CD4-positive, alpha-beta T cell (primary cell): ENCODE measurements at regions of chr5 and their contacts with region 1.

Region 1: GRCh38 chr5:177113566-177114424 is 19.8 kb upstream of the NSD1 start:
- DNase-seq: peak; percentile 60 to 90 (median 78)
- ATAC-seq: peak; percentile 55
- H3K4me3 ChIP-seq: no peak overlapping the region
- H3K4me3 Mint-ChIP-seq: no peak overlapping the region
- H3K27ac ChIP-seq: no peak overlapping the region
- H3K27ac Mint-ChIP-seq: peak overlapping the region; percentile 0
- H3K4me1 ChIP-seq: peaks cover 26% of the 10 kb centered on the region
- H3K4me1 Mint-ChIP-seq: peaks cover 20% of the 10 kb centered on the region
- H3K27me3 ChIP-seq: no peaks in the 10 kb centered on the region
- H3K27me3 Mint-ChIP-seq: no peaks in the 10 kb centered on the region
- CTCF ChIP-seq: peak; percentile 99

Region 2: DNA sequence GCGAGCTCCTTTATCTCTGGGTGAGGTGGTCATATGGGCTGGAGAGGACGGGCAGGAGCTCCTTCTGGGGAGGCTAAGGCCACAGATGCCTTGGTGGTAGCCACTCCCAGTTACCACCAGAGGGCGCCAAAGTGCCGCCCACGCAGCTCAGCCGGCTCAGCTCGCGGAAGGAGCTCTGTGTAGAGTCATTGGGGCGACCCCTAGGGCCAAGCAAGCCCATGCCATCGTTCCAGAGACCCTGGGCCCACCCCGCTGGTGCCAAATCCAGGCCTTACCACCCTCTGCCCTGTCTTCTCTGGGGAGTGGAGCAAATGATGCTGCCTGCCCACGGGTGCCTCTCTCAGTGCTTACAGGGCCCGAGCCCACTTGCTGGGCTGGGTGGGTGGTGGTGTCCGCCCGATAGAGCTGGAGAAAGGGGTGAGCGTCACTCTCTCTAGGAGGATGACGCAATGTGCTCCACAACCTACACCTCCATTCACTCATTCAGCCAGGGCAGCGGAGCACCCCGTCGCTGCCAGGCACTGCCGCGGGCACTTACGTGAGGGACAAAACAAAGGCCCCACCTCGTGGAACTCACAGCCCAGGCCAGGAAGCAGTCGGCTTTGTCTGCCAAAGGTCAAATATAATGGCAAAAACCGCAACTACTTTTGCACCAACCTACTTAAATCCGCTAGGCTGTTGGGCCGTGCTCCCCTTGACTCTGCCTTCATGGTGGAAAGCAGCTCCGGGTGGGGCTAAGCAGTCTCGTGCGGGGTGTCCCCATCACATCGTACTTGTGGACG is 452.7 kb before region 1 on chr5:
- CTCF ChIA-PET with region 1: interaction called, 3 read pairs
- POLR2A ChIA-PET with region 1: no interaction called
- intact Hi-C with region 1: loop called (anchors 2 kb)
- DNase-seq: peak; percentile 58 to 91 (median 73)
- ATAC-seq: peak; percentile 76
- H3K4me3 ChIP-seq: no peak overlapping the region
- H3K4me3 Mint-ChIP-seq: peak overlapping the region; percentile 83
- H3K27ac ChIP-seq: no peak overlapping the region
- H3K27ac Mint-ChIP-seq: peak overlapping the region; percentile 52
- H3K4me1 ChIP-seq: peaks cover 35% of the 10 kb centered on the region
- H3K4me1 Mint-ChIP-seq: peaks cover 33% of the 10 kb centered on the region
- H3K27me3 ChIP-seq: peaks cover 0 to 2% of the 10 kb centered on the region in 2 experiments
- H3K27me3 Mint-ChIP-seq: peaks cover 22% of the 10 kb centered on the region
- CTCF ChIP-seq: peak; percentile 97

Region 3: GRCh38 chr5:177006265-177006972 is 107.4 kb before region 1 on chr5 and contains the start of gene UIMC1:
- CTCF ChIA-PET with region 1: no interaction called
- POLR2A ChIA-PET with region 1: no interaction called
- intact Hi-C with region 1: no loop called
- DNase-seq: peak; percentile 84 to 96 (median 89)
- ATAC-seq: peak; percentile 83
- H3K4me3 ChIP-seq: peak within 1 kb of the TSS; percentile 91
- H3K4me3 Mint-ChIP-seq: peak within 1 kb of the TSS; percentile 99
- H3K27ac ChIP-seq: peak within 1 kb of the TSS; percentile 70 to 72
- H3K27ac Mint-ChIP-seq: peak within 1 kb of the TSS; percentile 95
- H3K4me1 ChIP-seq: peaks cover 32% of the 10 kb centered on the region
- H3K4me1 Mint-ChIP-seq: peaks cover 35% of the 10 kb centered on the region
- H3K27me3 ChIP-seq: no peaks in the 10 kb centered on the region
- H3K27me3 Mint-ChIP-seq: no peaks in the 10 kb centered on the region
- CTCF ChIP-seq: no peak
- total RNA-seq, gene UIMC1: 42.3 to 50.8 TPM

Region 4: DNA sequence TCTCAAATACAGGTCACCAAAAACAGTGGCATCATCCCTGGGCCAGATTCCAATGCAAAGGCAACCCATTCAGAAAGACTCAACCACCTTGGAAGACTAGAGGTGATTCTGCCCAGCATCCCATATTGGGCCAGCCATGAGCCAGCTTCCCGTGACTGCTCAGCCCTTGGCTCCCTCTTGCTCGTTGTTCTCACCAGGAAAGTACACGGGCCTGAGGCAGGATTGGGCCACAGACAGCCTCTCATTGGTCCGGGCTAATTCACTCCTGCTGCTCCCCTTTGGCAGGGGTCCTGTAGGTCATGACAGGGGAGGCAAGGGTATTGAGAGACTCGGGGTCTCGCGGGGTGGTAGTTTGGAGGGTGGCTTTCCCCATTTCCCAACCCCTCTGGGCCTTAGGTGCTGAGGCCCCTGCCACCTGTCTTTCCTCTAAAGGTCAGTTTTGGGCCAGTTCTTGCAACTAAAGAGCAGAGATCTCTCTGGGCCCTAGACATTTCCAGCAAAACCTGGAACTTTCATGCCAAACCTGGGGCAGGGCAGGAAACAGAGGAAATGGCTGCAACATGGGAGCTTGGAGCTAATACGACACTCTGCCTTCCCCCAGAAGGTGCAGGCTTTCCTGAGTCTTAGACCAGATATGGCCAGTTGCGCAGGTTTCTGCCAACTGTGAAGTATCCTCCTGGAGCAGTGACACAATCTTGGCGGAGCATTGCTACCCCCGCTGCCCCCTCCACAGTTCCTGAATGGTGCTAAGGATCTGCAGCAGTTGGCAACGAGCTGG is 49.1 kb before region 1 on chr5:
- CTCF ChIA-PET with region 1: no interaction called
- POLR2A ChIA-PET with region 1: no interaction called
- intact Hi-C with region 1: no loop called
- DNase-seq: no peak
- ATAC-seq: no peak
- H3K4me3 ChIP-seq: no peak overlapping the region
- H3K4me3 Mint-ChIP-seq: no peak overlapping the region
- H3K27ac ChIP-seq: no peak overlapping the region
- H3K27ac Mint-ChIP-seq: no peak overlapping the region
- H3K4me1 ChIP-seq: no peaks in the 10 kb centered on the region
- H3K4me1 Mint-ChIP-seq: no peaks in the 10 kb centered on the region
- H3K27me3 ChIP-seq: no peaks in the 10 kb centered on the region
- H3K27me3 Mint-ChIP-seq: no peaks in the 10 kb centered on the region
- CTCF ChIP-seq: no peak

Region 5: DNA sequence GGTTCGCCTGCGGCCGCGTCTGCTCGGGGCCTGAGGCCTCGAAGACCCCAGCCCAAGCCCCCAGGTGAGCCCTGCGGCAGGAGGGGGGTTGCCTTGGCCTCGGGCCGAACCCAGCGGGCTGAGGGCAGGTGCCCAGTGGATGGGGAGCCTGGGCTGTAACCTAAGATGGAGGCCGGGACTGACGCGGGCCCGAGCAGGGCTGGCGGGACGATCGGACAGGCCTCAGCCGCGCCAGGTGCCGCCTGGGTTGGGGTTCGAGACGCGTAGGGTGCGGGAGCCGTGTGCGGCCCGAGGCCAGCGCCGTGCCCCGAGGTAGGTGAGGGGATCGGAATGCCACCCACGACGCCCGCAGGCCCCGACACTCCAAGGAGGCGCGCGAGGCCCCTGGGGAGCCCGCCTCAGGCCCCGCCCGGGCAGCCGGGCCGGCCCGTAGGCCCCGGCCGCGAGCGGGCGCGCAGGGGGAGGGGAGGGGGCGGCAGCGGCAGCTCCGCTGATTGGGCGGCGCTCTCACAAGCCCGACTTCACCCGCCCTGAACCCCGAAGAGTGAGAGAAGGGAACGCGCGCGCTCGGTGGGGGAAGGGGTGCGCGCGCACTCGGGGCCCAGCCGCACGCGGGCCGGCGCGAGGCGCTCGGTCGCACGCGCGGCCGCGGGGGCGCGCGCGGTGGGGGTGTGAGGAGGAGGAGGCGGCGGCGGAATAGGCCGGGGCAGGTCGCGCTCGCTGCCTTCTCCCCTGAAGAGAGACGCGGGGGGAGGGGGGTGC is 19.5 kb after region 1 on chr5 and contains the start of gene NSD1:
- CTCF ChIA-PET with region 1: interaction called, 12 read pairs
- POLR2A ChIA-PET with region 1: interaction called, 31 read pairs
- intact Hi-C with region 1: loop called (anchors 1 kb)
- DNase-seq: peak; percentile 83 to 97 (median 90)
- ATAC-seq: peak; percentile 71
- H3K4me3 ChIP-seq: peak within 1 kb of the TSS; percentile 65
- H3K4me3 Mint-ChIP-seq: peak within 1 kb of the TSS; percentile 90
- H3K27ac ChIP-seq: peak within 1 kb of the TSS; percentile 71 to 76
- H3K27ac Mint-ChIP-seq: peak within 1 kb of the TSS; percentile 97
- H3K4me1 ChIP-seq: peaks cover 54% of the 10 kb centered on the region
- H3K4me1 Mint-ChIP-seq: peaks cover 67% of the 10 kb centered on the region
- H3K27me3 ChIP-seq: no peaks in the 10 kb centered on the region
- H3K27me3 Mint-ChIP-seq: no peaks in the 10 kb centered on the region
- CTCF ChIP-seq: no peak
- total RNA-seq, gene NSD1: 87.6 to 93.3 TPM

Region 6: GRCh38 chr5:177204281-177204680 is 90.5 kb after region 1 on chr5:
- CTCF ChIA-PET with region 1: interaction called, 4 read pairs
- POLR2A ChIA-PET with region 1: no interaction called
- intact Hi-C with region 1: loop called (anchors 5 kb)
- DNase-seq: no peak
- ATAC-seq: no peak
- H3K4me3 ChIP-seq: no peak overlapping the region
- H3K4me3 Mint-ChIP-seq: no peak overlapping the region
- H3K27ac ChIP-seq: no peak overlapping the region
- H3K27ac Mint-ChIP-seq: peak overlapping the region; percentile 50
- H3K4me1 ChIP-seq: peaks cover 4% of the 10 kb centered on the region
- H3K4me1 Mint-ChIP-seq: no peaks in the 10 kb centered on the region
- H3K27me3 ChIP-seq: no peaks in the 10 kb centered on the region
- H3K27me3 Mint-ChIP-seq: no peaks in the 10 kb centered on the region
- CTCF ChIP-seq: no peak

Region 7: DNA sequence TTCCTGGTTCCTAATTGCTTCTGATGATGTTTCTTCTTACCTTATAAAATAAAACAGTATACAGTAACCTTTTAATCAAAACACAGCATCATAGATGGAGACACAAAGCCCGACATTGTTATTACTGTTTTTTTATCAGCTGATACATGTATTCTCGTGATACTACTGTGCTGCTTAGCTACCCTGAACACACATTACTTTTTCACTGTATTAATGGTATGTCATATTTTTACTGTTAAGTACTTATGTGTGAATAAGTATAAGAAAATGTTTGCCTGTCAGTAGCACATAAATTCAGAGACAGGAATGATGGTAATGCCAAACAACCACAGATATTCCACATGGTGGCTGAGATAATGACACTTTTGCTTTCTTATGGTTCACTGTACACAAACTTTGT is 121.0 kb after region 1 on chr5:
- CTCF ChIA-PET with region 1: interaction called, 8 read pairs
- POLR2A ChIA-PET with region 1: no interaction called
- intact Hi-C with region 1: loop called in 1 of 2 experiments (anchors 5 kb)
- DNase-seq: no peak
- ATAC-seq: no peak
- H3K4me3 ChIP-seq: no peak overlapping the region
- H3K4me3 Mint-ChIP-seq: no peak overlapping the region
- H3K27ac ChIP-seq: no peak overlapping the region
- H3K27ac Mint-ChIP-seq: no peak overlapping the region
- H3K4me1 ChIP-seq: no peaks in the 10 kb centered on the region
- H3K4me1 Mint-ChIP-seq: peaks cover 26% of the 10 kb centered on the region
- H3K27me3 ChIP-seq: no peaks in the 10 kb centered on the region
- H3K27me3 Mint-ChIP-seq: no peaks in the 10 kb centered on the region
- CTCF ChIP-seq: no peak

Region 8: DNA sequence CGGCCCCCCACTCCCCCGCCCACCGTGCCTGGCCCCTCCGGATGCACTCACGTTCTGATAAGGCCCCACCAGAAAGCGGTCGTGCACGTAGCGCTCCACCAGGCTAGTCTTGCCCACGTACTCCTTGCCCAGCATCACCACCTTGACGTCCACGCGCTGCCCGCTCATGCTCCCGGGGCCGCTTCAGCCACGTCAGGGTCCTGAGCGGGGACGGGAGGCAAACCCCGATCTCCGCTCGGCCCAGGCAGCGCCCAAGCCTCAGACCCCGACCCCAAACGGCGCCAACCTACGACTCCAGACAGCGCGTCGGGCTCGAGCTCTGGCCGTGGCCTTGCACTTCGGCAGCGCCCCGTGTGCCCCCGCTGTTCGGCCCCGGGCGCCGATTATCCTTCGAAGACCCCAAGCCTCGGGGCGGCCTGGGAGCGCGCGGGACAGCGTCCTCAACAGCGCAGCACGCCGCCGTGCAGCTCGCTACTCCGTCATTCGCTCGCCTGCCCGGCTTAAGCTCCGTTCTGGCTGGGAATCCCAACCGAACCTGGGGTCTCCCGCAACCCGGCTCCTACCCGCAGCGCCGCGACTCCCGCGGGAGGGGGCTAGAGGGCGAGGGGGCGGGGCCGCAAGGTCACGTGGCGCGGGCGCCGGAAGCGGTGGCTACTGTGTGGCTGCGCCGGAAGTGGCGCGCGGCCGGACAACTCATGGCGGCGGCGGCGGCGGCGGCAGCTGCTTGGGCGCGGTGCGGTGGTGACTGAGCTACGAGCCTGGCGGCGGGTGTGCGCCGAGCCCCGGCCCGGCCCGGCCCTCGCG is 189.5 kb after region 1 on chr5 and contains the starts of genes PRELID1 and RAB24:
- CTCF ChIA-PET with region 1: no interaction called
- POLR2A ChIA-PET with region 1: interaction called, 3 read pairs
- intact Hi-C with region 1: loop called in 1 of 2 experiments (anchors 1 kb)
- DNase-seq: peak; percentile 73 to 95 (median 86)
- ATAC-seq: peak; percentile 67
- H3K4me3 ChIP-seq: peak within 1 kb of the TSS; percentile 92
- H3K4me3 Mint-ChIP-seq: peak within 1 kb of the TSS; percentile 90
- H3K27ac ChIP-seq: peak within 1 kb of the TSS; percentile 60 to 78
- H3K27ac Mint-ChIP-seq: peak within 1 kb of the TSS; percentile 88
- H3K4me1 ChIP-seq: peaks cover 82% of the 10 kb centered on the region
- H3K4me1 Mint-ChIP-seq: peaks cover 81% of the 10 kb centered on the region
- H3K27me3 ChIP-seq: no peaks in the 10 kb centered on the region
- H3K27me3 Mint-ChIP-seq: no peaks in the 10 kb centered on the region
- CTCF ChIP-seq: peak; percentile 43
- total RNA-seq, gene PRELID1: 33.1 to 35.0 TPM
- total RNA-seq, gene RAB24: 17.0 to 18.0 TPM

Region 9: DNA sequence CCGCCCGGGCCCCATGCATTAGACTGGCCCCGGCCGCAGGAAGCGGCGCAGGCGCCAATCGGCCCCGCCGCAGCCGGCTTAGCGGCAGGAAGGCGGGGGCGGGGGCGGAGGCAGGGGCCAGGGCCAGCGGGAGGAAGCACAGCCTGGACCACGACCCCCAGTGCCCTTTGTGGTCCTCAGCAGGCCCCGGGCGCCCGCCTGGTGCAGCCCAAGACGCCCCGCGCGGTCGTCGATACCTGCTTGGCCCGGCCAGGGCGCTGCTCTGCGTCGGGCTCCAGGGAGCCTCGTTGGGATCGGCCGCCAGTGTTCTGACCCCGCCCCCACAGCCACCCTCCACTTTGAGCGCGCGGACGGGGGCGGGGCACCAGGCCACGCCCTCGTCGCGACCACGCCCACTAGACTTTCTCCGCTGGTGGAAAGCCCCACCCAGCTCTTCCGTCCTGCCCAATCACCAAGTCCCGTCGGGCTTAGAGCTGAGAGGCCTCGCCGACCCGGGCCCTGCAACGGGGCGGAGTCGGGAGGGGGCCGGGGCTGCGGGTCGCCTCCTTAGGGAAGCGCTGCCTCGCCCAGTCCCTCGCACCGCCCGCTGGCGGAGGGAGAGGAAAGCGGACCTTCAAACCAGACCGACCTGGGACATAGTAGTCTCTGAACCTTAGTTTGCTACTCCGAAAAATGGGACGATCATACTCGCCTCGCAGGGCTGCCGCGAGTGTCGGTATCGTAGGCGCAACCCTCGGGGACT is 383.7 kb after region 1 on chr5 and contains the start of gene PDLIM7:
- CTCF ChIA-PET with region 1: interaction called, 3 read pairs
- POLR2A ChIA-PET with region 1: no interaction called
- intact Hi-C with region 1: loop called in 1 of 2 experiments (anchors 2 kb)
- DNase-seq: peak; percentile 87 to 98 (median 94)
- ATAC-seq: peak; percentile 89
- H3K4me3 ChIP-seq: peak within 1 kb of the TSS; percentile 70
- H3K4me3 Mint-ChIP-seq: peak within 1 kb of the TSS; percentile 74
- H3K27ac ChIP-seq: no peak within 1 kb of the TSS
- H3K27ac Mint-ChIP-seq: no peak within 1 kb of the TSS
- H3K4me1 ChIP-seq: peaks cover 50% of the 10 kb centered on the region
- H3K4me1 Mint-ChIP-seq: peaks cover 31% of the 10 kb centered on the region
- H3K27me3 ChIP-seq: no peaks in the 10 kb centered on the region
- H3K27me3 Mint-ChIP-seq: no peaks in the 10 kb centered on the region
- CTCF ChIP-seq: no peak
- total RNA-seq, gene PDLIM7: 5.2 to 6.0 TPM